Activated CD4-positive, alpha-beta memory T cell treated with anti-CD3 and anti-CD28 coated beads for 36 hours (primary cell): ENCODE measurements at regions of chr6 and their contacts with region 1.

Region 1: DNA sequence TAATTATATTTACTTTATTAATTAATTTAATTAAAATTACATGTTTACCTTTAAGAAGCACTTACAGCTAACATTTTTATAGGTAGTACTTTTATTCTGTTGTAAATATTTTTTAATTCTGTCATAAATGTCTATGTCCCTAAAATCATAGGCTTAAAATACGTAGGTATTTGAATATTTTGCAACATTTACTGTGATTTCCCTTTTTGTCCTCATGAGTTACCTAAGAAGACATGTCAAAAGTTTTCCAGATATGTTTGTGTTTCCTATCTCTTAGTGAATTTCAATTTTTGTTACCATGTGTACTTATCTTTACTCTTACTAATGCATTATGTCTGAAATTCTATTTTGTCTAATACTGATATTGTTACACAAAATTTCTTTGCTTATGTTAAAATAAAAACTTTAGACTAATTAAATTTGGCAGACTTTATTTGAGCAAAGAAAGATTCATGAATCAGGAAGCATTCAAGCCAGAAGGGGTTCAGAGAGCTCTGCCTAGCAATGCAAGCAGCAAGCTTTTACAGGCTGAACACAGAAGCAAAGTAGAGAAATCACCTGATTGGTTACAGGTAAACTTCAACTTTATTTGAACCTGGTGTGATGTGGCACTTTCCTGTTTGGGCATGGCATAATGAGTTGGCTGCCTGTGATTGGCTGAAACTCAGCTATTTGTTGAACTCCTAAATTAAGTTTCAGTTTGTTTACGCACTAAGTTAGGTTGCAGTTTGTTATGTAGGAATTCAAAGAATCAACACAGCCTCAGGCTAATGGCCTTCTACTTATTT is 123.2 kb upstream of the TMEM170B start:
- DNase-seq: peak; percentile 63
- H3K4me3 Mint-ChIP-seq: no peak overlapping the region
- H3K27ac Mint-ChIP-seq: no peak overlapping the region
- H3K4me1 Mint-ChIP-seq: peaks cover 48% of the 10 kb centered on the region
- H3K27me3 Mint-ChIP-seq: no peaks in the 10 kb centered on the region

Region 2: DNA sequence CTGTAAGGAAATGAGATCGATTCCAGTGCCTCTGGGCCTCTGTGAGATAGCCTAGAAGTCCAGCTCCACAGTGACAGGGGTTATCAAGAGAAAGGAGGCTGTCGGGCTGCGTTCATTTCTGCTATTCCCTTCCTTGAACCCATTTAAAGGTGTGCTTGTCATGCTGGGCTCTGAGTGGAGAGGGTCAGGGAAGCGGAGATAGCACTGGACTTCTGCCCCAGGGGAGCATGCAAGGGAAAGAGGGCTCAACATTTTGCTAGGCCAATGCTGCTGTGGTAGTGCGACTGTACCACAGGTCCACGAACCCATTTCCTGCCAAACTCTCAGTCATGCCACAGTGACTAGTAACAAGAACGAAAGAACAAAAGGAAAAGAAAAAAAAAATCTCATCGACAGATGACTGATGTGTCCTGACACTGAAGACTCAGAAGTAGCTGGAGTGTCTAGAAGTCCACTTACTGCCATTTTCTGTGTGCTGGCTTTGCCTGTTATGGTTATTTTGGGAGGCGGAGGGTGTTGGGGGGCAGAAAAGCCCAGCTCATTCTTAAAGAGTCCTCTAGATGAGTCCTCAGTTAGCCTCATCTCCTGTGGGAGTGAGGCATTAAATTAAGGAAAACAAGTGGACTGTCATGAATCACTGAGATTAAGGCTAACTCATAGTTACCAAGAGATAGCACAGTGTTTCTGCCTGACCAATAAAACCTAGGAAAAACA is 190.0 kb before region 1 on chr6:
- CTCF ChIA-PET with region 1: interaction called, 3 read pairs
- POLR2A ChIA-PET with region 1: interaction called, 6 read pairs
- intact Hi-C with region 1: loop called (anchors 2 kb)
- DNase-seq: peak; percentile 75
- H3K4me3 Mint-ChIP-seq: peak overlapping the region; percentile 44
- H3K27ac Mint-ChIP-seq: peak overlapping the region; percentile 87
- H3K4me1 Mint-ChIP-seq: peaks cover 59% of the 10 kb centered on the region
- H3K27me3 Mint-ChIP-seq: no peaks in the 10 kb centered on the region

Region 3: DNA sequence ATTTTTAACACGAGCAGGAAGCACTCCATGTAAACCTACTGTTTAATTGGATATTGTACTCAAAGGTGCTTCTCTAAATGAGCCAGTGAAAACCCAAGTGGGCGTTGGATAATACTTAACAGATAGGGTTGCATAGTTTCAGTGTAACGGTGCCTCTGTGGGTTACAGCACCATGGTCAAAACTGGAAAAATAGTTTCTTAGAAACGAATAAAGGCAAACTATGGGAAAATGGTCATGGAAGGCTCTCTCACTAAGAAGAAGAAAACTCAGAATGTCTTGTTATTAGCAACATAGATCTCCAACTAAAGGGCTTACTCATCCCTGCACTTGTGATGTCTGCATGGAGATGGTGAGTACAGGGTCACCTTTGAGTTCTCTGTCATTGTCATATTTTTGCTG is 122.8 kb before region 1 on chr6:
- CTCF ChIA-PET with region 1: interaction called, 3 read pairs
- POLR2A ChIA-PET with region 1: no interaction called
- intact Hi-C with region 1: loop called (anchors 1 kb)
- DNase-seq: peak; percentile 50
- H3K4me3 Mint-ChIP-seq: no peak overlapping the region
- H3K27ac Mint-ChIP-seq: peak overlapping the region; percentile 56
- H3K4me1 Mint-ChIP-seq: peaks cover 27% of the 10 kb centered on the region
- H3K27me3 Mint-ChIP-seq: no peaks in the 10 kb centered on the region

Region 4: DNA sequence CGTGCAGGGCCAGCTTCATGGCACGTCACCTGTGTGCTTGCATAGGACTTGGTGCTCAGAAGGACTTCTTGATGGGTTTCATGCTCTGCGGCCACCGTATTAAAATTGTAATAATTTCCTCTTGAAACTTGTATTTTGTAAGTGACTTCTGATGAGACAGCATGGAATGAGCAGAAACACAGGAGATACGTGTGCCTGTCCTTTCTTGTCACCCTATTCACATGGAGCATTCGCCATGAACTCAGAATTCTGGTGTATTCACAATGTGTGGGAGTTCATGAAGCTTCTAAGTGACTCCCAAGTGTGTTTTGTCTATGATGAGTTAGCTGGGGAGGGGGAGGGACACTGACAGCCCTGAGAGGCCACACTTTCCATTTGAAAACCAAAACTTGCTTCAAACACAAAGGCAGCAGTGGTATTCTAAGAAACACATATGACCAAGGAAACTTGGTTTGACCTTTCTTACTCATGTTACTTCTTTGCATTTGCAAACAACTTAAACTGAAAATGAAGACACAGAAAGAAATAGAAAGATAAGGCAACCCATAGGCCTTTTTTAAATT is 89.8 kb before region 1 on chr6:
- CTCF ChIA-PET with region 1: no interaction called
- POLR2A ChIA-PET with region 1: no interaction called
- intact Hi-C with region 1: loop called (anchors 1 kb)
- DNase-seq: peak; percentile 83
- H3K4me3 Mint-ChIP-seq: peak overlapping the region; percentile 57
- H3K27ac Mint-ChIP-seq: peak overlapping the region; percentile 85
- H3K4me1 Mint-ChIP-seq: peaks cover 73% of the 10 kb centered on the region
- H3K27me3 Mint-ChIP-seq: no peaks in the 10 kb centered on the region

Region 5: DNA sequence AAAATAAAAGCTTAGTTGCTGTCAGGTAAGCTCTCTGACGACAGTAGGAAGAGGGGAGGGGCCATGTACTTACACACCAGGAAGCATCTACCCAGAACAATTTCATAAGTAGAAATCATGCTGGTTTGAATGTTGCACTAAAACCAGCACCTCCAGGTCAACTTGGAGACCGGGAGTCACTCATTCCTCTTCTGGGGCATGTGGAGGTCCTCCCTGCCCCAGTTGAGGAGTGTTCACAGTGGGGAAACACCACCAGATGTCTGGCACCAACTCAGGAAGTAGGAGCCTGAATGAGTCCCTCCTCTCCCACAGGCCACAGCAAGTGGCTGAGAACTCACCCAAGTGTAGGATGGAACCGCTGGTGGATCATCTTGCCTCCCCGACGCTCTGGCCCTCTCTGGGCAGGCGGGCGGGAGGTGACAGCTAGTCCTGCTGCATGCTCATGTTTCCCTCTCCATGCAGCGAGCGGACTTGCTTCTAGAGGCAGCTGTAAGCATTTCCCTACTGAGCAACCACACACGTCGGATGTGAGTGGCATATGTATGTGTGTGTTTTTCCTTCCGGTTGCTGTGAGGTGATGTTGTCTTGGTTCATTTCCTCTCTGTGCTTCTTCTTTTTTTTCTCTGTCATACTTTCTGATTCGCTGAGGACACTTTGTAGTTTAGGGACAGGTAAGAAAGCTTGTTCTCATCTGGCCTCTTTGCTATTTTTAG is 32.4 kb before region 1 on chr6:
- CTCF ChIA-PET with region 1: interaction called, 4 read pairs
- POLR2A ChIA-PET with region 1: interaction called, 19 read pairs
- intact Hi-C with region 1: loop called (anchors 1 kb)
- DNase-seq: peak; percentile 82
- H3K4me3 Mint-ChIP-seq: peak overlapping the region; percentile 85
- H3K27ac Mint-ChIP-seq: peak overlapping the region; percentile 95
- H3K4me1 Mint-ChIP-seq: peaks cover 58% of the 10 kb centered on the region
- H3K27me3 Mint-ChIP-seq: no peaks in the 10 kb centered on the region